Tibial artery (tissue), 4 donors: ENCODE measurements at regions of chr17 and their contacts with region 1.

Region 1: GRCh38 chr17:82030470-82031302 is 792 bp upstream of the RAC3 start:
- DNase-seq: peak; percentile 68 to 89
- H3K4me3 ChIP-seq: peak overlapping the region; percentile 43 to 53
- H3K27ac ChIP-seq: peak overlapping the region in 1 of 2 donors; percentile 4
- H3K4me1 ChIP-seq: peaks cover 0 to 28% (median 21%) of the 10 kb centered on the region in 4 donors
- H3K27me3 ChIP-seq: peaks cover 0 to 53% of the 10 kb centered on the region in 2 donors
- CTCF ChIP-seq: peak; percentile 94 to 96

Region 2: GRCh38 chr17:82153745-82154375 is 123.2 kb after region 1 on chr17:
- intact Hi-C with region 1: loop called (anchors 2 kb)
- DNase-seq: peak; percentile 70 to 78
- H3K4me3 ChIP-seq: no peak overlapping the region
- H3K27ac ChIP-seq: no peak overlapping the region
- H3K4me1 ChIP-seq: peaks cover 0 to 12% (median 0%) of the 10 kb centered on the region in 4 donors
- H3K27me3 ChIP-seq: no peaks in the 10 kb centered on the region
- CTCF ChIP-seq: peak; percentile 84 to 88